ENCODE measurements at regions of chr1 and their contacts with region 1.

Region 1: GRCh38 chr1:10378081-10378841 is 20.6 kb upstream of the PGD start:
- DNase-seq: peak; percentile 14
- H3K4me3 ChIP-seq: no peak overlapping the region
- H3K27ac ChIP-seq: no peak overlapping the region
- H3K4me1 ChIP-seq: no peaks in the 10 kb centered on the region
- H3K27me3 ChIP-seq: no peaks in the 10 kb centered on the region
- CTCF ChIP-seq: no peak

Region 2: GRCh38 chr1:10415211-10415930 is 37.1 kb after region 1 on chr1:
- CTCF ChIA-PET with region 1: no interaction called
- dilution Hi-C with region 1: loop called (anchors 5 kb)
- in situ Hi-C with region 1: no loop called
- intact Hi-C with region 1: no loop called
- DNase-seq: no peak
- H3K4me3 ChIP-seq: no peak overlapping the region
- H3K27ac ChIP-seq: no peak overlapping the region
- H3K4me1 ChIP-seq: no peaks in the 10 kb centered on the region
- H3K27me3 ChIP-seq: no peaks in the 10 kb centered on the region
- CTCF ChIP-seq: no peak